Left ventricle myocardium superior (tissue), 1 donor: ENCODE measurements at regions of chr3 and their contacts with region 1.

Region 1: DNA sequence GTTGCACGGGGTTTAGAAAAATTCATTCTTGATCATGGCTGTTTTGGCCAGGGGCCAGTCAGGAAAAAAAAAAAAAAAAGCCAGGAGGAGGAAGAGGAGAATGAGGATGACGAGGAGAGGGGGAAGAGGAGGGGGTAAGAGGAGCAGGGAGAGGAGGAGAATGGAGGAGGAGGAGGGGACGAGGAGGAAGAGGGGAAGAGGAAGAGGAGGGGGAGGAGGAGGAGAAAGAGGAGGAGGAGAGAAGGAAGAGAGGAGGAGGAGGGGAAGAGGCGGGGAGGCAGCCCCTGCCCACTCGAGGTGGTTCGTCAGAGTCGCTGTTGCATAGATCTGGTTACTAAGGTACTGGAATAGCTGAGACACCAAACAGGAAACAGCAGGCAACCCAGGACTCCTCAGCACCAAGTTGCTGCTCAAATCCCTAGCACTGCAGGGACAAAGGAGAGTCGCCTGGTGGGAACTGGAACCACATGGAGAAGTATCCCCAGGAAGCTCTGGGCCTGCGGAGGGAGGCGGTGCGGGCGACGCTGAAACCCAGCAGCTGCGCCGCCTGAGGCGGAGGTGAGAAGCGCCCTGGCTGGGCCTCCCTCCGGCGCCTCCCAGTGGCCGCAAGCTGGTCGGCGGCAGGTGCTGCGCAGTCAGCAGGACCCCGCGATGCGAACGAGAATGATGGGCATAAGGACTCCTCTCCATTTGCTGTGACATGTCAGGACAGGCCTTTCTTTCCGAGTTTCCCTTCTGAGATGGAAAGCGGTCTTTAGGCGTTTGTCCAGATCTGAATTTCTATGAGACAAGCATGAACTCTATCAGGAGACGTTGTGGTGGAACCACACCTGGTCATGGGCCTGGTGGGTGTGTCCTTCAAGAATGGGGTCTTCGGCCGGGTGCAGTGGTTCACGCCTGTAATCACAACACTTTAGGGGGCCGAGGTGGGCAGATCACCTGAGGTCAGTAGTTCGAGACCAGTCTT is 17.5 kb downstream of the FAM240A start:
- DNase-seq: peak; percentile 92
- ATAC-seq: peak; percentile 94

Region 2: GRCh38 chr3:46395210-46395731 is 234.6 kb before region 1 on chr3:
- intact Hi-C with region 1: no loop called
- DNase-seq: no peak
- ATAC-seq: no peak

Region 3: DNA sequence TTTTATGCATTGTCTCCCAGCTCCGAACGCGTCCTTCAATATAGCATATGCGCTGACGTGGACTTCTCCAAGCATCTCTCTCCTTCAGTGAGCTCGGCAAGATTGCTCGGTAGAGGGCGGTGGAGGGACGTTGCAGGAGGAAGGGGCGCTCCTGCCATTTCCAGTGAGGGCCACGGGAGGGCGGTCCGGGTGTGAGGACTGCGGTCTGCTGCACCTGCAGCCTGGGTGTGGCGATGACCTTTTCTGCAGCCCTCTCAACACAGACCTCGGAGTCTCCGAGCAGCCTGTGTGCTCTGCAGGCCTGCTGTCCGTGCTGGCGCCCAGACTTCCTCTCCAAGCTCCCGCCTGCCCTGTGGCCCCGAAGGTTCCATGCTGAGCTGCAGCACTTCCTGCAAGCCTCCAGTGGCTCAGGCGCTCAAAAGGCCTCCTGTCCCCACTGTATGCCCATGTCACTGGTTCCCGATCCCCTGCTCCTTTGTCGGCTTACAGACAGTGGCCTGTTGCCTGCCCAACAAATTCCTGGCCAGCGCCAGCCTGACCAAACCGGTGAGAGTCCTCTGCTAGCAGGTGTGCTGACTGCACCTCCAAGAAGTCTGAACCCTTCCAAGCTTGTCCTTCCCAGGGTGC is 141.0 kb before region 1 on chr3:
- intact Hi-C with region 1: loop called (anchors 10 kb)
- DNase-seq: peak; percentile 93
- ATAC-seq: peak; percentile 89

Region 4: GRCh38 chr3:47128137-47128536 is 498.3 kb after region 1 on chr3:
- intact Hi-C with region 1: no loop called
- DNase-seq: no peak
- ATAC-seq: no peak